ENCODE measurements at regions of chr4 and their contacts with region 1.

Region 1: GRCh38 chr4:152500800-152501434 is 35.0 kb downstream of the FBXW7 start:
- DNase-seq: peak; percentile 85
- ATAC-seq: peak; percentile 76
- H3K4me3 ChIP-seq: no peak overlapping the region
- H3K27ac ChIP-seq: no peak overlapping the region
- H3K4me1 ChIP-seq: no peaks in the 10 kb centered on the region
- H3K27me3 ChIP-seq: no peaks in the 10 kb centered on the region
- CTCF ChIP-seq: peak; percentile 69 to 85 (median 69)
- POLR2A ChIP-seq: no peak
- RAD21 ChIP-seq: peak; percentile 78

Region 2: GRCh38 chr4:152454398-152455011 is 46.4 kb before region 1 on chr4:
- CTCF ChIA-PET with region 1: interaction called, 13 read pairs
- POLR2A ChIA-PET with region 1: no interaction called
- RAD21 ChIA-PET with region 1: no interaction called
- intact Hi-C with region 1: no loop called
- DNase-seq: no peak
- ATAC-seq: no peak
- H3K4me3 ChIP-seq: no peak overlapping the region
- H3K27ac ChIP-seq: no peak overlapping the region
- H3K4me1 ChIP-seq: no peaks in the 10 kb centered on the region
- H3K27me3 ChIP-seq: no peaks in the 10 kb centered on the region
- CTCF ChIP-seq: peak; percentile 52 to 71 (median 61); a peak in 5 of 6 replicates
- POLR2A ChIP-seq: no peak
- RAD21 ChIP-seq: peak; percentile 67

Region 3: GRCh38 chr4:152485726-152486276 is 15.1 kb before region 1 on chr4:
- CTCF ChIA-PET with region 1: interaction called, 41 read pairs
- POLR2A ChIA-PET with region 1: no interaction called
- RAD21 ChIA-PET with region 1: no interaction called
- intact Hi-C with region 1: no loop called
- DNase-seq: no peak
- ATAC-seq: no peak
- H3K4me3 ChIP-seq: no peak overlapping the region
- H3K27ac ChIP-seq: no peak overlapping the region
- H3K4me1 ChIP-seq: no peaks in the 10 kb centered on the region
- H3K27me3 ChIP-seq: no peaks in the 10 kb centered on the region
- CTCF ChIP-seq: no peak
- POLR2A ChIP-seq: no peak
- RAD21 ChIP-seq: no peak

Region 4: DNA sequence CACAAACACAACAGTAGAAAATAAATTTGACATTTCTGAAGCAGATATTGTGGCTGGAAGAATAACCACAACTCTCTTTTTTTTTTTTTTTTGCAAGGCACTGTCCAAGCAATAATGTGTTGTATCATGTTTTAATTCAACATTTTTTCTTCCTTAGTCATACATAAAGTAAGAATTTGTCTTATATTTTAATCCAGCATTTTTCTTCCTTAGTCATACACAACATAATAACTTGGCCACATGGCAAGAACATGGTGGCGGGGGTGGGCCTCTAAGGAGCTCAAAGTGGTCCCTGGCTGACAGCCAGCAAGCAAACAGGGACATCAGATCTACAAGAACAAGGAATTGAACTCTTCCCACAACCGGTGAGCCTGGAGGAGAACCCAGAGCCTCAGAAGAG is 14.8 kb after region 1 on chr4:
- CTCF ChIA-PET with region 1: interaction called, 20 read pairs
- POLR2A ChIA-PET with region 1: interaction called, 4 read pairs
- RAD21 ChIA-PET with region 1: no interaction called
- intact Hi-C with region 1: no loop called
- DNase-seq: no peak
- ATAC-seq: no peak
- H3K4me3 ChIP-seq: no peak overlapping the region
- H3K27ac ChIP-seq: no peak overlapping the region
- H3K4me1 ChIP-seq: no peaks in the 10 kb centered on the region; a peak in 1 of 4 replicates
- H3K27me3 ChIP-seq: no peaks in the 10 kb centered on the region
- CTCF ChIP-seq: no peak
- POLR2A ChIP-seq: no peak
- RAD21 ChIP-seq: no peak

Region 5: GRCh38 chr4:152599095-152599494 is 98.2 kb after region 1 on chr4:
- CTCF ChIA-PET with region 1: no interaction called
- POLR2A ChIA-PET with region 1: no interaction called
- RAD21 ChIA-PET with region 1: no interaction called
- intact Hi-C with region 1: no loop called
- DNase-seq: no peak
- ATAC-seq: no peak
- H3K4me3 ChIP-seq: no peak overlapping the region
- H3K27ac ChIP-seq: no peak overlapping the region
- H3K4me1 ChIP-seq: no peaks in the 10 kb centered on the region
- H3K27me3 ChIP-seq: no peaks in the 10 kb centered on the region
- CTCF ChIP-seq: no peak
- POLR2A ChIP-seq: no peak
- RAD21 ChIP-seq: no peak

Region 6: GRCh38 chr4:152640058-152640833 is 139.3 kb after region 1 on chr4:
- CTCF ChIA-PET with region 1: interaction called, 29 read pairs
- POLR2A ChIA-PET with region 1: no interaction called
- RAD21 ChIA-PET with region 1: interaction called in 1 of 2 experiments, 5 read pairs
- intact Hi-C with region 1: loop called (anchors 1 kb)
- DNase-seq: no peak
- ATAC-seq: peak; percentile 74
- H3K4me3 ChIP-seq: no peak overlapping the region
- H3K27ac ChIP-seq: no peak overlapping the region
- H3K4me1 ChIP-seq: no peaks in the 10 kb centered on the region
- H3K27me3 ChIP-seq: no peaks in the 10 kb centered on the region
- CTCF ChIP-seq: peak; percentile 31 to 73 (median 63); a peak in 3 of 6 replicates
- POLR2A ChIP-seq: no peak
- RAD21 ChIP-seq: peak; percentile 76

Region 7: GRCh38 chr4:152735396-152735859 is 234.5 kb after region 1 on chr4:
- CTCF ChIA-PET with region 1: interaction called, 4 read pairs
- POLR2A ChIA-PET with region 1: no interaction called
- RAD21 ChIA-PET with region 1: interaction called in 1 of 2 experiments, 3 read pairs
- intact Hi-C with region 1: loop called (anchors 2 kb)
- DNase-seq: peak; percentile 12
- ATAC-seq: peak; percentile 75
- H3K4me3 ChIP-seq: no peak overlapping the region
- H3K27ac ChIP-seq: no peak overlapping the region
- H3K4me1 ChIP-seq: no peaks in the 10 kb centered on the region
- H3K27me3 ChIP-seq: no peaks in the 10 kb centered on the region
- CTCF ChIP-seq: peak; percentile 44 to 70 (median 54); a peak in 5 of 6 replicates
- POLR2A ChIP-seq: no peak
- RAD21 ChIP-seq: peak; percentile 78

Region 8: GRCh38 chr4:153211986-153212729 is 711.2 kb after region 1 on chr4:
- CTCF ChIA-PET with region 1: no interaction called
- POLR2A ChIA-PET with region 1: no interaction called
- RAD21 ChIA-PET with region 1: no interaction called
- intact Hi-C with region 1: no loop called
- DNase-seq: no peak
- ATAC-seq: no peak
- H3K4me3 ChIP-seq: no peak overlapping the region
- H3K27ac ChIP-seq: no peak overlapping the region
- H3K4me1 ChIP-seq: peaks cover 2 to 9% of the 10 kb centered on the region in 2 experiments
- H3K27me3 ChIP-seq: no peaks in the 10 kb centered on the region
- CTCF ChIP-seq: no peak
- POLR2A ChIP-seq: no peak
- RAD21 ChIP-seq: no peak

Region 9: GRCh38 chr4:154049457-154050181 is 1548.7 kb after region 1 on chr4:
- CTCF ChIA-PET with region 1: no interaction called
- POLR2A ChIA-PET with region 1: no interaction called
- RAD21 ChIA-PET with region 1: no interaction called
- intact Hi-C with region 1: no loop called
- DNase-seq: peak; percentile 16
- ATAC-seq: peak; percentile 79
- H3K4me3 ChIP-seq: no peak overlapping the region
- H3K27ac ChIP-seq: no peak overlapping the region
- H3K4me1 ChIP-seq: no peaks in the 10 kb centered on the region
- H3K27me3 ChIP-seq: no peaks in the 10 kb centered on the region
- CTCF ChIP-seq: peak; percentile 4 to 51 (median 35); a peak in 3 of 6 replicates
- POLR2A ChIP-seq: no peak
- RAD21 ChIP-seq: peak; percentile 25; the same call in 1 of the 2 replicates

Measured in HCT116 (cell line).